ENCODE measurements at regions of chr2 and their contacts with region 1.

Region 1: GRCh38 chr2:68196120-68196716 is 38.5 kb downstream of the PNO1 start:
- H3K4me3 ChIP-seq: no peak overlapping the region
- H3K27ac ChIP-seq: no peak overlapping the region
- H3K4me1 ChIP-seq: peaks cover 10% of the 10 kb centered on the region; the same call in 1 of the 2 replicates
- CTCF ChIP-seq: no peak

Region 2: DNA sequence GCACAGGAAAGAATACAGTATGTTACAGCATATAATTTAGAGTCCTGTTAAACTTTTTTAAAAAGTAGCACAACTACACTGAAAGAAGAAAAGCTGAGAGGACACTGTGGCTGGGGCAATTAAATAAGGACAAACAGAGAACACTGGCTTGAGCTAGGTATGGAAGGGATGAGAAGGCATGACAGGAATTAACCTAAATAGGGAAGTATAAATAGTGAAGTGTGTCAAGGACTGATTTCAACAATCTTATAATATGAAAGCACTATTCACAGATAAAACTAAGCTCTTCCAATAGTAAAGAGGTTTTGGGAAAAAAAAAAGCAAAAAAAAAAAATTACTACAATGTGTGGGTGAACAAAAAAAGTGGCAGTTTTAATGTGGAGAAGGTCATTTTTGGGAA is 10.6 kb after region 1 on chr2:
- CTCF ChIA-PET with region 1: interaction called, 26 read pairs
- POLR2A ChIA-PET with region 1: no interaction called
- H3K4me3 ChIP-seq: no peak overlapping the region
- H3K27ac ChIP-seq: no peak overlapping the region
- H3K4me1 ChIP-seq: 0 out of 2 replicates have a peak, but pooled peaks cover 6% of the 10 kb centered on the region
- CTCF ChIP-seq: no peak

Region 3: DNA sequence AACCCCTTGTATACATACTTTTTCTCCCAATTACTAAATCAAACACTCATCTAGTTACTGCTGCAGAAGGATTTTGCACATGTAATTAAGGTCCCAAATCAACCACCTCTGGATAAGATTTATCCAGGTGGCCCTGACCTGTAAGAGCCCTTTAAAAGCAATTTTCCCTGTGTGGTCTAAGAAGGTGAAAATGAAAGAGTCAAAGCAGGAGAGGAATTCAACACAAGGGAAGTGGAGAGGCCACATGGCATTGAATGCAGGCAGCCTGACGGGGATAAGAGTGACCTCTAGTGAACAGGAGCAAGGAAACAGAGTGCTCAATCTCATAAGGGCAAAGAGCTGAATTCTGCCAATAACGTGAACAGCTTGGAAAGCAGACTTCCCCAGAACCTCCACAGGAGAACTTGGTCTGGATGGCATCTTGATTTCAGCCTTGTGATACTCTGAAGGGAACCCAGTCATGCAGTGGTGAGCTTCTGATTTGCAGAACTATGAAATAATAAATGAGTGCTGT is 29.0 kb after region 1 on chr2:
- CTCF ChIA-PET with region 1: interaction called, 16 read pairs
- POLR2A ChIA-PET with region 1: no interaction called
- H3K4me3 ChIP-seq: no peak overlapping the region
- H3K27ac ChIP-seq: no peak overlapping the region
- H3K4me1 ChIP-seq: peaks cover 3% of the 10 kb centered on the region; the same call in 1 of the 2 replicates
- CTCF ChIP-seq: peak; percentile 59; the same call in 1 of the 2 replicates

Region 4: DNA sequence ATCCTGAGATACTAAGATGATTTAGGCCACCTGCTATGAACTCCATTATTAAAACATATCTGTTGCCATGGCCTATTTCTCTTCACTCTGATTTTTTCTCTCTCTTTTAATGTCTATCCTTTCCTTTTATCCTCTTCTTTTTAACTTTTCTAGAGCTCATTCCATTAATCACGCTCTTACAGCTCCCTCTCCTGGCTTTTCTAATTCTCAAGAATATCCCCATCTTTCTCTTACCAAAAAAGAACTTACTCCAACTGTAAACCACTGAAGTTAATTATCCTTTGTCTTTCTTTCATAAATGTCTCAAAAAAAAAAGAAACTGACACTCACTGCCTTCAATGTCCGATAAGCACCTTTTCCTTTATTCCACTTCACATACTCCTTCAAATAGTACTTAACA is 48.2 kb after region 1 on chr2:
- CTCF ChIA-PET with region 1: interaction called, 26 read pairs
- POLR2A ChIA-PET with region 1: no interaction called
- H3K4me3 ChIP-seq: no peak overlapping the region
- H3K27ac ChIP-seq: peak overlapping the region; percentile 7; the same call in 1 of the 2 replicates
- H3K4me1 ChIP-seq: peaks cover 36% of the 10 kb centered on the region
- CTCF ChIP-seq: no peak

Region 5: GRCh38 chr2:68282811-68283418 is 86.7 kb after region 1 on chr2:
- CTCF ChIA-PET with region 1: interaction called, 57 read pairs
- POLR2A ChIA-PET with region 1: no interaction called
- H3K4me3 ChIP-seq: no peak overlapping the region
- H3K27ac ChIP-seq: no peak overlapping the region
- H3K4me1 ChIP-seq: peaks cover 7% of the 10 kb centered on the region
- CTCF ChIP-seq: no peak